Esophagus muscularis mucosa (tissue), 4 donors: ENCODE measurements at regions of chr9 and their contacts with region 1.

Region 1: DNA sequence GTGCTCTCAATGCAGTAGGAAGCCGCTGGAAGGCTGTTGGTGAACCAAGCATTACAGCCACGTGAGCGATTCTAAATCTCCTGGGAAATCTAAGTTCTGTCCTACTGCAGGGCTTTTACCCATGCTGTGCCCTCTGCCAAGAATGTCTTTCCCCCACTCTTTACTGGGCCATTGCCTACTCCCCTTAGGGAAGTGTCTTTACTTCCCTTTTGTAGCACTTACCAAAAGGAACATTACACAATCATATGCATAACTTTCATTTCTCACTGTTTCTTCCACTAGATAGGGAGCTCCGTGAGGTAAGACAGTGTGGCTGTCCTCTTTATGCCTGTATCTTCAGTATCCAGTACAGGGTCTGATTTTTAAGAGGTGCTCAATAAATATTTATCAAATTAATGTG is 241.7 kb upstream of the NR4A3 start:
- DNase-seq: no peak
- H3K4me3 ChIP-seq: no peak overlapping the region
- H3K27ac ChIP-seq: no peak overlapping the region
- H3K4me1 ChIP-seq: no peaks in the 10 kb centered on the region
- H3K27me3 ChIP-seq: no peaks in the 10 kb centered on the region
- CTCF ChIP-seq: no peak
- EP300 ChIP-seq: no peak
- POLR2A ChIP-seq: no peak

Region 2: GRCh38 chr9:99647604-99648003 is 67.6 kb after region 1 on chr9:
- intact Hi-C with region 1: loop called (anchors 10 kb)
- DNase-seq: no peak
- H3K4me3 ChIP-seq: no peak overlapping the region
- H3K27ac ChIP-seq: no peak overlapping the region
- H3K4me1 ChIP-seq: no peaks in the 10 kb centered on the region
- H3K27me3 ChIP-seq: no peaks in the 10 kb centered on the region
- CTCF ChIP-seq: no peak
- EP300 ChIP-seq: no peak
- POLR2A ChIP-seq: no peak